Adrenal gland (tissue), 19 donors: ENCODE measurements at regions of chrX and their contacts with region 1.

Region 1: DNA sequence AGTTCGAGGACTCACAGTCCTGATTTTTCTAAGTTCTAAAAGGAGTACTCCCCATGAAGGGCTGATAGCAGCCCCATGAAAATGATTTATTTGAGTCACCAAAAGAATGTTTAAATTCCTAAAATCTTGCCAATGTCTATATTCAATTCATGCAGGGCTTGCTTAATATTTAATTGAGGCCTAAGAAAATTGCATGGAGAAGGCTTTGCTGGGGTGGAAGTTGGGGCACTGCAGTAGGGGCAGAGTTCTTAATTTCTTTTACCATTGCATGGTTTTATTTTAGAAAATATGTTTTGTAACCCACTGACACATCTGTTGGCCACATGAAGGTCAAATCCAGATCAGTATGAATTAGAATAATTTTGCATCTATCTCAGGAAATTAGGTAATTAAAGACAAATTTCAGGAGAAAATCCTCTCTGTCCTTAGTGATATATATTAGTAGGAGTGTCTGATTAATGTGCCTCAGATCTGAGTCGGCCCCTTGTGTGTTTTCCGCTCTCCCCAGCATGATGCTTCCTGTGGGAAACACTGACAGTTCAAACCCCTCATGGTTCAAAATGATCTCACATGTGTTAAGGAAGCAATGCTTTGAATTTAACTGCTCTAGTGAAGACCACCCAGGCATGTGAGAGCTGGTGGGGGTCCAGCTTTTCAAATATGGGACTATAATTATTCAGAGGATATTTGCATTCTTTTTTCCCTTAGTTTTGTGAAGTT is 54.0 kb upstream of the EGFL6 start:
- DNase-seq: no peak
- H3K4me3 ChIP-seq: no peak overlapping the region
- H3K27ac ChIP-seq: no peak overlapping the region
- H3K4me1 ChIP-seq: no peaks in the 10 kb centered on the region
- H3K27me3 ChIP-seq: no peaks in the 10 kb centered on the region
- CTCF ChIP-seq: no peak
- POLR2A ChIP-seq: no peak

Region 2: DNA sequence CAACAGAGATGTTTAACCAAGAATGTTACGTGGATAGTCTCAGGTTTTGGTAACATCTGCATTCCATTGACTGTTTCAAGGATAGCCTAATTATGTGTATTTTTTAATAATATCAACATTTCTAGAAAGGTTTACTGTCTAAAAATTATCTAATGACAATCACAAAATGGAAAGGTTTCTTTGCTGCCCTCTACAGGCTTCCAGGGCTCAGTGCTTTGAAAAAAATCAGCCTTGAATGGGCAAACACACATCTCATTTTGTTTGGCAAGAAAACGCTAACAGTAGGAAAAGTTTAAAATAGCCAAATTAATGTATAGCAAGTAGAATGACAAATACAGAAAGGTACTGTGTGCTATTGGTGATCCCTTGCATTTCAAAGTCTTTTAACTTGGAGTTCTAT is 947.5 kb before region 1 on chrX:
- intact Hi-C with region 1: no loop called
- DNase-seq: no peak
- H3K4me3 ChIP-seq: no peak overlapping the region
- H3K27ac ChIP-seq: no peak overlapping the region
- H3K4me1 ChIP-seq: no peaks in the 10 kb centered on the region
- H3K27me3 ChIP-seq: no peaks in the 10 kb centered on the region
- CTCF ChIP-seq: peak; percentile 15 to 67 (median 38)
- POLR2A ChIP-seq: no peak

Region 3: GRCh38 chrX:13764765-13765164 is 249.4 kb after region 1 on chrX:
- intact Hi-C with region 1: loop called in 1 of 2 experiments (anchors 10 kb)
- DNase-seq: no peak
- H3K4me3 ChIP-seq: no peak overlapping the region
- H3K27ac ChIP-seq: no peak overlapping the region
- H3K4me1 ChIP-seq: no peaks in the 10 kb centered on the region
- H3K27me3 ChIP-seq: no peaks in the 10 kb centered on the region
- CTCF ChIP-seq: no peak
- POLR2A ChIP-seq: no peak